Activated T-helper 1 cell treated with anti-CD3 and anti-CD28 coated beads, Interleukin-12 subunit alpha, Interleukin-12 subunit beta, Interleukin-2, Interleukin-4 antibody, amounts not matched to agents 30 ng/mL and 10 ng/mL and 1 ng/mL, durations not matched to agents 14 hours and 24 hours and 36 hours (primary cell): ENCODE measurements at regions of chr20 and their contacts with region 1.

Region 1: GRCh38 chr20:39264506-39265172 is 302.5 kb downstream of the DHX35 start:
- DNase-seq: peak; percentile 2
- H3K4me3 Mint-ChIP-seq: no peak overlapping the region
- H3K27ac Mint-ChIP-seq: no peak overlapping the region
- H3K4me1 Mint-ChIP-seq: no peaks in the 10 kb centered on the region
- H3K27me3 Mint-ChIP-seq: peaks cover 4% of the 10 kb centered on the region

Region 2: GRCh38 chr20:39429716-39430115 is 165.1 kb after region 1 on chr20:
- intact Hi-C with region 1: no loop called
- DNase-seq: no peak
- H3K4me3 Mint-ChIP-seq: no peak overlapping the region
- H3K27ac Mint-ChIP-seq: no peak overlapping the region
- H3K4me1 Mint-ChIP-seq: no peaks in the 10 kb centered on the region
- H3K27me3 Mint-ChIP-seq: no peaks in the 10 kb centered on the region

Region 3: GRCh38 chr20:39874049-39874888 is 609.6 kb after region 1 on chr20:
- intact Hi-C with region 1: loop called (anchors 10 kb)
- DNase-seq: peak; percentile 0
- H3K4me3 Mint-ChIP-seq: no peak overlapping the region
- H3K27ac Mint-ChIP-seq: no peak overlapping the region
- H3K4me1 Mint-ChIP-seq: no peaks in the 10 kb centered on the region
- H3K27me3 Mint-ChIP-seq: no peaks in the 10 kb centered on the region